Right ventricle myocardium superior (tissue), 1 donor: ENCODE measurements at regions of chr7 and their contacts with region 1.

Region 1: GRCh38 chr7:25565949-25566348 is 337.7 kb upstream of the NPVF start:
- DNase-seq: peak; percentile 59
- ATAC-seq: peak; percentile 53

Region 2: GRCh38 chr7:25259587-25260243 is 306.2 kb before region 1 on chr7:
- intact Hi-C with region 1: loop called (anchors 5 kb)
- DNase-seq: peak; percentile 53
- ATAC-seq: peak; percentile 87

Region 3: DNA sequence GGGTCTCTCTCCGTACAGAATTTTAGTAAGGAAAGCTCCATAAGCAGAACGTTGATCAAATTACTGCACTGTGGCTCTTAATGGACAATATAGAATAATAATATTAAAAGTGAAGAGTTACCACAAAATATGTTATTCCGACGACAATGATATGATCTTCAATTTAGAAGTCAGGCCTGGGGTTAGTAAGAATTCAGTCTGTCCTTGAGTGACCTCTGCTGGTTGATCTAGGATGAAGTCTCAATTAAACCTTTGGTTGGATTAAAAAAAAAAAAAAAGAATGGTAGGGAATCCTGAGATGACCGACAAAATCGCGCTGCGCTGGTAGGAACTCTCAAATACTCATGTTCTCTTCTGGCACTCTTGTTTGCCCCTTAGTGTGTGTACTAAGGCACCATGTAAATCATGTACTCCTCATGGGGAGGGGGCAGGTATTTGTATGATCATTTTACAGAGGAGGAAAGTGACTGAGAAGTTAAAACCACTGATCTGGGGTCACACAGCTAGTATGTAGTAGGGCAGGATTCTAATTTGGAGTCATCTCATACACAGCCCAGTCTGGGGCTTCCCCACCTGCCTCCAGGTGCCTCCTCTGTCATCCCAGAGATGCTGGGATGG is 176.4 kb before region 1 on chr7:
- intact Hi-C with region 1: loop called (anchors 5 kb)
- DNase-seq: no peak
- ATAC-seq: peak; percentile 42

Region 4: DNA sequence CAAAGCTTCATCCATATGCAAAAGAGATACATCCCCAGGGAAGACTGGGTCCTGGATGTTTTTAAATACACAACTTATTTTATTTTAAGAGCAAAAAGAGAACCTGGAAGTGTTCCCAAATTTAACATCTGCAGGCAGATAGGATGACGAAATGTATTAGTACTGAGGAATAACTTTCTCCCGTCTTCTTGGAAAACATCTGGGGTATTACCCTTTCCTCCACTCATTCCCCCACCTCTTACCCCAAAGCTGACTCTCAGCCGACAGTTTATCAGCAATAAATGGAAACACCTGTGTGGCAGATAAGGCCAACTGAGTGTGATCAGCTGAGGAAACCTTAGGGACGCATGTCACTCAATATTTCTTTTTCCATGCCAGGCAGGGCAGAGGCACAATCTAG is 97.9 kb after region 1 on chr7:
- intact Hi-C with region 1: no loop called
- DNase-seq: no peak
- ATAC-seq: peak; percentile 68

Region 5: GRCh38 chr7:25851332-25852210 is 285.6 kb after region 1 on chr7:
- intact Hi-C with region 1: loop called (anchors 2 kb)
- DNase-seq: peak; percentile 87
- ATAC-seq: peak; percentile 84